Activated B cell treated with CpG ODN at 0.5 μM for 24 hours (primary cell): ENCODE measurements at regions of chr3 and their contacts with region 1.

Region 1: DNA sequence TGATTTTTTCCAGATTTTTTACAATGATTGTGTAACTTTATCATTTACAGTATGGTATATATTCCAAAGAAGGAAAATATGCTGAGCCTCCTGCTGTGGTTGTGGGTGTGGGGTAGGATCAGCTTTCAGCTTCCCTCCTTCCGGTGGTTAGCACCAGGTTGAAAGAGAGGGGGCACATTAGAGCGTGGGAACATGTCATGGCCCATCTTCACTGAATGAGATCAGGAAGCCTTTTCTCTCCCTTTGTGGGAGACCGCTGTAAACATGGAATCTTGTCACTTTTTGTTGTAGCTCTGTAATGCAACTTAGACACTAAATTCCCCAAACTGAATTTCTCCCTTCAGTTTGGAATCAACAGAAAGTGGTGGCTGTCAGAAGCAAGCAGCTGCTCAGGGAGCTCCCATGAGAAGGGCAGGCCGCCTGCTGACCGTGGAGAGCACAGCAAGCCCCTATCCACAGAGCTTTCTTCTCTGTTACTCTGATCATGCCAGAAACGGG is 86.7 kb upstream of the LIMD1 start:
- DNase-seq: no peak
- ATAC-seq: no peak
- H3K4me3 Mint-ChIP-seq: no peak overlapping the region
- H3K27ac Mint-ChIP-seq: no peak overlapping the region
- H3K4me1 Mint-ChIP-seq: no peaks in the 10 kb centered on the region
- H3K27me3 Mint-ChIP-seq: no peaks in the 10 kb centered on the region
- CTCF ChIP-seq: no peak

Region 2: GRCh38 chr3:45832691-45833090 is 324.8 kb after region 1 on chr3:
- CTCF ChIA-PET with region 1: interaction called, 3 read pairs
- POLR2A ChIA-PET with region 1: no interaction called
- intact Hi-C with region 1: loop called (anchors 5 kb)
- DNase-seq: no peak
- ATAC-seq: no peak
- H3K4me3 Mint-ChIP-seq: no peak overlapping the region
- H3K27ac Mint-ChIP-seq: no peak overlapping the region
- H3K4me1 Mint-ChIP-seq: no peaks in the 10 kb centered on the region
- H3K27me3 Mint-ChIP-seq: no peaks in the 10 kb centered on the region
- CTCF ChIP-seq: no peak

Region 3: GRCh38 chr3:45929042-45929679 is 421.3 kb after region 1 on chr3:
- CTCF ChIA-PET with region 1: interaction called, 9 read pairs
- POLR2A ChIA-PET with region 1: no interaction called
- intact Hi-C with region 1: loop called (anchors 1 kb)
- DNase-seq: peak; percentile 54
- ATAC-seq: peak; percentile 92
- H3K4me3 Mint-ChIP-seq: no peak overlapping the region
- H3K27ac Mint-ChIP-seq: no peak overlapping the region
- H3K4me1 Mint-ChIP-seq: no peaks in the 10 kb centered on the region
- H3K27me3 Mint-ChIP-seq: no peaks in the 10 kb centered on the region
- CTCF ChIP-seq: no peak